ENCODE measurements at regions of chr11 and their contacts with region 1.

Region 1: GRCh38 chr11:66438504-66439466 is at the start of gene MRPL11:
- DNase-seq: peak; percentile 83
- H3K4me3 Mint-ChIP-seq: peak within 1 kb of the TSS; percentile 87
- H3K27ac Mint-ChIP-seq: peak within 1 kb of the TSS; percentile 95
- H3K4me1 Mint-ChIP-seq: peaks cover 17% of the 10 kb centered on the region
- H3K27me3 Mint-ChIP-seq: no peaks in the 10 kb centered on the region
- total RNA-seq, gene MRPL11: 93.0 and 93.6 TPM in 2 replicates

Region 2: DNA sequence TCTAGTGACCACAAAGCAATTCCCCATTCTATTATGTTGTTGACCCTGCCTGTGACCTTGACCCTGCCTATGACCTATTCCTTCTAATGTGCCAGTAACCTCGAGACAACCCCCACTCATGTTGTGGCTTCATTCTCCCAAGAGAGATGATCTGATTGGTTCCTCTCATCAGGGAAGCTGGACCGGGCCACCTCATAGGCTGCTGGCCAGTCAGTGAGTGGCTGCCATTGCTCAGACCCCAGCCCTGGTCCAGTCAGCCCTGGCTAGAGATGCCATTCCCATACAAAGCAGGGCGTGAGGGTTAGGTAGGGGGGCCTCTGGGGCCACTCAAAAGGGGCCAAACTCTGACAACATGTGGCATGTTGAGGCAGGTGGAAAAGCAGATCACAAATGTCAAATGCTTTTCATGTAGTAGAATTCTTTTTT is 79.1 kb before region 1 on chr11:
- intact Hi-C with region 1: no loop called
- DNase-seq: no peak
- H3K4me3 Mint-ChIP-seq: no peak overlapping the region
- H3K27ac Mint-ChIP-seq: peak overlapping the region; percentile 31
- H3K4me1 Mint-ChIP-seq: no peaks in the 10 kb centered on the region
- H3K27me3 Mint-ChIP-seq: no peaks in the 10 kb centered on the region

Region 3: DNA sequence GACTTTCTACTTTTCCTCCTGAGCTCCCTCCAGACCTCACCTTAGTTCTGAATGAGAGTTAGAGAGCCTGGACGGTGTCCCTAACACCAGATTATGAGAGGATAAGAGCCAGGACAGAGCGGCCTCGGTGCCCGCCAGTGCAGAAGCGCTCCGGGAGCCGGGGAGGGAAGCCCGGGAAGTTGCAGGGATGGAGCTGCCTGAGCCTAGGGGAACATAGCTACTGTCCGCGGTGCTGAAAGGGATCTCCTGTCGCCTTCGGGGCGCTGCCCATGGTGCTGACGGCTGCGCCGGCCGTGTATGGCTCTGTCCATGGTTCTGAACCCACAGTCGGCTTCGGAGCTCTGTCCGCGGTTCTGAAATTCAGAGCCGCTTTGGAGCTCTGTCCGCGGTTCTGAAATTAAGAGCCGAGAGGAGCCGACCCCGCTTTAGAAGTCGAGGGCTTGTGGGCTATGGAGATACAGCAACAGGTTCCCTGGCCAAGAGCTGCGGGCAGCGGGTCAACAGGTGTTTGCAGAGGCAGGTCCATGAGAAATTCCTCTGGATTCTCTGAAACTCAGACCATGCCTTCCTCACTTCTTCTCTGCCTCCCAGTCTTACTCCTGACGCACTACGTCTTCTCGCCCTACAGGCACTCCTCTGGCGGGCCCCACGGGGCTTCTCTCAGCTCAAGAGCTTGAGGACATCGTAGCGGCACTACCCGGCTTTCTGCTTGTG is 17.1 kb before region 1 on chr11:
- intact Hi-C with region 1: loop called (anchors 1 kb)
- DNase-seq: peak; percentile 83
- H3K4me3 Mint-ChIP-seq: no peak overlapping the region
- H3K27ac Mint-ChIP-seq: peak overlapping the region; percentile 53
- H3K4me1 Mint-ChIP-seq: peaks cover 28% of the 10 kb centered on the region
- H3K27me3 Mint-ChIP-seq: peaks cover 21% of the 10 kb centered on the region

Region 4: GRCh38 chr11:66466225-66467027 is 27.6 kb after region 1 on chr11 and contains the start of gene PELI3:
- intact Hi-C with region 1: loop called (anchors 1 kb)
- DNase-seq: peak; percentile 86
- H3K4me3 Mint-ChIP-seq: peak within 1 kb of the TSS; percentile 94
- H3K27ac Mint-ChIP-seq: peak within 1 kb of the TSS; percentile 88
- H3K4me1 Mint-ChIP-seq: peaks cover 28% of the 10 kb centered on the region
- H3K27me3 Mint-ChIP-seq: no peaks in the 10 kb centered on the region
- total RNA-seq, gene PELI3: 15.3 and 15.8 TPM in 2 replicates

Region 5: DNA sequence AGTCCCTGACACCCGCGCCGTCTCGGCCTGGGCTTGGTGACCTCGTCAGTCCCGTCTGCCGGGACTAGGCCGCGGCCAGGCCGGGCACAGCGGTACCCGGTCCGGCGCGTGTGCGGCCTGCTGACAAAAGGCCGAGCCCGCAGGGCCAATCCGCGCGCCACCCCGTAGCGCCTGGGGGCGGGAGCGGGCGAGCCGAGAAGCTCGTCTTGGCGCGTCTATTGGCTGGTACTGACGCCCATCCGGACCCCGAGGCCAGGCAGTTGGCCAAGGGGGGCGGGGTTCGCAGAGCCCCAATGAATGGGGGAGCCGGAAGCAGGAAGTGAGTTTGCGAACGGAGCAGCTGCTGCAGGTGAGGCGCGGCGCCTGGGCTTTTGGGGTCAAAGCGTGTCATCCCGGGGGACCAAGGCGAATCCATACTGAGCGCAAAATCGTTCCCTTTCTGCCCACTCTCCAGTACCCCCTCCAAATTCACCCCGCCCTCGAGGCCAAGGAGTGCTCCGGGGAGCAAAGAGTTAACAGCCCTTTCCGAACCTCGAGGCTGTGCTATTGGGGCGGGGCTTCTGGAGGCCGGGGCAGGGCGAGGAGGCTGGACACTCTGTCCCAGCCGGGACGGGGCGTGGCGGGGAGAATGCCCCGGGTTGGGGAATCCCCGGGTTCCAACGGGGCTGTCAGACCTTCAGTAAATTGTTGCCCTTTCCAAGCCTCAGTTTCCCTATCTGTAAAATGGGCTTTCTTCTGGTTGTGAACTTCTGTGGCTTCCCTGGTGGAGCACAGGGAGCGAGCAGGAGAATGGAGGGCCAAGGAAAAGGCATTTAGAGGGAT is 41.5 kb after region 1 on chr11 and contains the start of gene DPP3:
- intact Hi-C with region 1: loop called (anchors 1 kb)
- DNase-seq: peak; percentile 96
- H3K4me3 Mint-ChIP-seq: peak within 1 kb of the TSS; percentile 89
- H3K27ac Mint-ChIP-seq: peak within 1 kb of the TSS; percentile 82
- H3K4me1 Mint-ChIP-seq: peaks cover 44% of the 10 kb centered on the region
- H3K27me3 Mint-ChIP-seq: no peaks in the 10 kb centered on the region
- total RNA-seq, gene DPP3: 102 and 112 TPM in 2 replicates

Region 6: GRCh38 chr11:66592457-66593302 is 153.9 kb after region 1 on chr11 and contains the starts of genes CCDC87 and CCS:
- intact Hi-C with region 1: loop called (anchors 1 kb)
- DNase-seq: peak; percentile 96
- H3K4me3 Mint-ChIP-seq: peak within 1 kb of the TSS; percentile 100
- H3K27ac Mint-ChIP-seq: peak within 1 kb of the TSS; percentile 97
- H3K4me1 Mint-ChIP-seq: peaks cover 30% of the 10 kb centered on the region
- H3K27me3 Mint-ChIP-seq: no peaks in the 10 kb centered on the region
- total RNA-seq, gene CCDC87: 0.29 and 0.37 TPM in 2 replicates
- total RNA-seq, gene CCS: 25.3 and 32.1 TPM in 2 replicates